ENCODE measurements at regions of chr6 and their contacts with region 1.

Region 1: GRCh38 chr6:3341467-3341866 is 82.7 kb downstream of the PSMG4 start:
- DNase-seq: peak; percentile 55 to 61
- ATAC-seq: peak; percentile 59 to 77
- H3K4me3 ChIP-seq: no peak overlapping the region
- H3K27ac ChIP-seq: peak overlapping the region; percentile 73 to 80 (median 77)
- H3K4me1 ChIP-seq: peaks cover 52 to 58% of the 10 kb centered on the region in 2 donors
- H3K27me3 ChIP-seq: no peaks in the 10 kb centered on the region
- CTCF ChIP-seq: no peak
- POLR2A ChIP-seq: peak in 1 of 2 donors; percentile 24

Region 2: DNA sequence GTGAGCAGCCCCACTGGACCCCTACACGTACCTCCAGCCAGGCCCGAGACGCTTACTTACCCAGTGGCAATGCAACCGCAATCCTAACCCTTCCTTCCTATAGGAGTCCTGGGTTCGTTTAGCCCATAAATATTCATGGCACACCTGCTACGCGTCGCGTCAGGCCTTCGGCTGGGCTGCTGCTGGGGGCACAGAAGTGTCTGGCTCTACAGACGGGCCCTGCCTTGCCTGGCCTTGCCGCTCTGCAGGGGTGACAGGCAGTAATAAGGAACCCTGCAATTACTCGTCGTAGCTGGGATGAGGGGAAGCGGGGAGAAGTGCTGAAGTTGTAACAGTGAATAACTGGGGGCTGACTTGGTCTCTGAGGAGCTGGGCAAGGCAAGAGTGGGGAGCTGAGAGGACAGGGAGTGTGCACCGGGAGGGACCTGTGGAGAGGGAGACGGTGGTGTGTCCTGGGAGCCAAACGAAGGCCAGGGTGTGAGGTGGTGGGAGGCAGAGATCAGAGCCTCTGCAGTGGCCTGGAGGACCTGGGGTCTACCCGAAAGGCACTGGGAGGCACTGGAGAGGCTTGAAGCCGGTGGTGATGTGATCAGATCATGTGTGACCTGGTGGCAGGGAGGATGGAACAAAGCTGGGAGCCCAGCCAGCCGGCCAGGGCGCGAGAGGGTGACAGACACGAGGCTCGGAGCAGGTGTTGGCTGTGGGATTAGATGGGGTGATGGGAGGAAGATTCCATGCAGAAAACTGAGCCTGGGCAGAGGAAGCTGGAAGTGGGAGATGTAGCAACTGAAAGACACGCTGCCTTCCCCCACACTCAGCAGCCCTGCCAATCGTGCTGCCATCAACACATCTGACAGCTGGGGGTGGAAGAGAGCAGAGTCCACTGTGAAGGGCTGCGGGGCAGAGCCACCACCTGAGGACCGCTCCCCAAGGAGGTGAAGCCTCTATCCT is 46.3 kb before region 1 on chr6:
- in situ Hi-C with region 1: no loop called
- intact Hi-C with region 1: loop called (anchors 5 kb)
- DNase-seq: peak; percentile 91 to 93
- ATAC-seq: peak; percentile 96 to 97
- H3K4me3 ChIP-seq: no peak overlapping the region
- H3K27ac ChIP-seq: peak overlapping the region; percentile 56 to 72 (median 63)
- H3K4me1 ChIP-seq: peaks cover 7 to 12% of the 10 kb centered on the region in 2 donors
- H3K27me3 ChIP-seq: no peaks in the 10 kb centered on the region
- CTCF ChIP-seq: peak; percentile 44 to 61 (median 51)
- POLR2A ChIP-seq: no peak

Region 3: DNA sequence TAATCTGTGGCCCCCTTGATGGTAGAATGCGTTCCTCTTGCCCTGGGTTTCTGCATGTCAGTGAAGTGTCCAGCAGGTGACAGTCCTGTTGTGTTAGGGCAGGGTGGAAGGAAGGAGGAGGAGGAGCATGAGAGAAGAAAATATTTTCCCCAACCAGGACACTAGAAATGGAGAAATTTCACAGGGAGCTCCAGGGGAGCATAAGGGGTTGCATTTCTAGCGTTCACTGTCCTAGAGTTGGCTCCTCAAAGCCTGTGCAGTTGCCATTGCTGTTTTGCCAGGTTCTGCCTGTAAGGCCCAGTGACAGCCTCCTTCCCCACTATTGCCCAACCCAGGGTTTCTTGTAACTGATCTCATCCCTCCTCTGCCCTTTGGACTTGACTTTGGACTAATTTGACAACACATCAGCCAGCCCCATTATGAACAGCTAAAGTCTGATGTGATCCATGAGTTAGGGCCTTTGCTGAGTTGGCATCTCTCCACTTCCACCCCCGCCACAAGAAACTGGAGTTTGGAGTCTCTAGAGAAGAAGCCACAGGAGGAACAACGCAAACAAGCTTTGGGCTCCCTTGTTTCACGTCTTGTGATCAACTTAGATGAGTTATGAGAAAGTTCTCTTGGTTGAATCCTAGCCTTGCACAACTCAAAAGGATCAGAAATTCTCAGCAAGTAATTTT is 493.7 kb after region 1 on chr6:
- in situ Hi-C with region 1: no loop called
- intact Hi-C with region 1: loop called (anchors 10 kb)
- DNase-seq: peak; percentile 74 to 86
- ATAC-seq: peak; percentile 97
- H3K4me3 ChIP-seq: no peak overlapping the region
- H3K27ac ChIP-seq: peak overlapping the region; percentile 62 to 79 (median 68)
- H3K4me1 ChIP-seq: peaks cover 18 to 19% of the 10 kb centered on the region in 2 donors
- H3K27me3 ChIP-seq: no peaks in the 10 kb centered on the region
- CTCF ChIP-seq: peak in 2 of 5 experiments; percentile 15 to 37
- POLR2A ChIP-seq: no peak

Region 4: GRCh38 chr6:3913077-3913957 is 571.9 kb after region 1 on chr6:
- in situ Hi-C with region 1: no loop called
- intact Hi-C with region 1: loop called (anchors 10 kb)
- DNase-seq: peak; percentile 73 to 74
- ATAC-seq: peak; percentile 92 to 93
- H3K4me3 ChIP-seq: peak overlapping the region in 1 of 4 donors; percentile 11
- H3K27ac ChIP-seq: peak overlapping the region; percentile 85 to 92 (median 88)
- H3K4me1 ChIP-seq: peaks cover 55 to 61% of the 10 kb centered on the region in 2 donors
- H3K27me3 ChIP-seq: no peaks in the 10 kb centered on the region
- CTCF ChIP-seq: no peak
- POLR2A ChIP-seq: no peak

Measured in gastrocnemius medialis (tissue), 4 donors.